ENCODE measurements at regions of chr6 and their contacts with region 1.

Region 1: DNA sequence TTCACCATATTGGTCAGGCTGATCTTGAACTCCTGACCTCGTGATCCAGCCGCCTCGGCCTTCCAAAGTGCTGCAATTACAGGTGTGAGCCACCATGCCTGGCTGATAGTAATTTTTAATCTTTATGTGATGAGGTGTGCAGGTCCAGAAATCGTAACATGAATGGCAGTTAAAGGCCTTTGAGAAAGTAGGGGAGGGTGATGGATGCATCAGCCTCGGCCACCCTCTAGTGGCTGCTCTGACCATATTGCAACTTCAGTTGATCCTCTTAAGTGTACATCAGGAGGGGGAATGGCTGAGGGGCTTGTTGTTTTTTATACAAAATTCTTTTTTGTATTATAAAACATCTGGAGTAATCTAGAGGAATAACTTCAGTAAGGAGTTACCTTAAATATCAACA is 193.0 kb downstream of the ZFAND3 start:
- DNase-seq: peak; percentile 71
- H3K4me3 ChIP-seq: no peak overlapping the region
- H3K27ac ChIP-seq: no peak overlapping the region
- H3K4me1 ChIP-seq: no peaks in the 10 kb centered on the region
- H3K27me3 ChIP-seq: no peaks in the 10 kb centered on the region

Region 2: DNA sequence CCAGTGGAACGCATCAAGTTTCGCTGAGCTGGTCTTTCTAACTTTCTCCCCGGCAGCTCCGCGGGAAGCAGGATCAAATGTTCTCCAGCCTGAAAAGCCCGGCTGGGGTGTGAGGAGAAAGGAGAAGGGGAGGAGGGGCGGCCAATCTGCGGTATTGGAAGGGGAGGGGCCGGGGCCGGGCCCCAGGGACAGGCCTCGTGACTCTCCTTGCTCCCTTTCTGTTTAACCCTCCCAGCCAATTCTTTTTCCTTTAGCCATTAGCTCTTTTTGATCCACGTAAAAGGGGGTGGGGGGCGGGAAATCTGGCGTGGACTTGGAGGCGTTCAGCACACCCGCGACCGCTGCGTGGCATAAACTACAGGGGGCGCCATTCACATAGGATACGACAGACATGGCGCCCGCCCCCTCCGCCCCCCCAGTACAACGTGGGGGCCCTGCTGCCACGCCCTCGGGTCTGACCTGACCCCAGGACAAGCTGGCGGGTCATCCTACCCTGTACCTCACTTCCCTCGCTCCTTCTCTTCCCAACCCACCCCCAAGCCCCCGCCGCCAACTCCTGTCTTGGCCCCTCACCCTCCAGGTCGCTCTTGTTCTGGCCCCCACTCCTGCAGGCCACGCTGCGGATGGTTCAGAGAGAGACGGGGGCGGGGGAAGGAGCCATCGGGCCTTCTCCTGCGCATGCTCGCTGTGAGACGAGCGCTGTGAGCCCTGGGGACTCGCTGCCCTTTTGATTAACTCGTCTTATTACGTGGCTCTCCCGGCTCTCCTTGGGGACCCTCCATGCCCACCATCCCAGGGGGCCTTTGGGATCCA is 307.1 kb before region 1 on chr6:
- in situ Hi-C with region 1: loop called (anchors 25 kb)
- DNase-seq: peak; percentile 94
- H3K4me3 ChIP-seq: peak overlapping the region; percentile 72
- H3K27ac ChIP-seq: peak overlapping the region; percentile 16; the same call in 1 of the 2 replicates
- H3K4me1 ChIP-seq: no peaks in the 10 kb centered on the region; the same call in 1 of the 2 replicates
- H3K27me3 ChIP-seq: no peaks in the 10 kb centered on the region